Activated naive CD4-positive, alpha-beta T cell treated with anti-CD3 and anti-CD28 coated beads, Interleukin-2, amount 10 ng/mL, durations not matched to agents 7 days and 5 days (primary cell): ENCODE measurements at regions of chr1 and their contacts with region 1.

Region 1: GRCh38 chr1:160291248-160292220 is 6.6 kb upstream of the PEX19 start:
- DNase-seq: peak; percentile 81
- H3K4me3 Mint-ChIP-seq: no peak overlapping the region
- H3K27ac Mint-ChIP-seq: peak overlapping the region; percentile 35
- H3K4me1 Mint-ChIP-seq: no peaks in the 10 kb centered on the region
- H3K27me3 Mint-ChIP-seq: no peaks in the 10 kb centered on the region

Region 2: GRCh38 chr1:160098852-160099561 is 192.5 kb before region 1 on chr1:
- CTCF ChIA-PET with region 1: interaction called, 64 read pairs
- DNase-seq: peak; percentile 99
- H3K4me3 Mint-ChIP-seq: peak overlapping the region; percentile 71
- H3K27ac Mint-ChIP-seq: peak overlapping the region; percentile 93
- H3K4me1 Mint-ChIP-seq: peaks cover 53% of the 10 kb centered on the region
- H3K27me3 Mint-ChIP-seq: peaks cover 7% of the 10 kb centered on the region

Region 3: GRCh38 chr1:160261893-160262794 is 29.4 kb before region 1 on chr1 and contains the start of gene DCAF8:
- CTCF ChIA-PET with region 1: interaction called, 34 read pairs
- DNase-seq: peak; percentile 99
- H3K4me3 Mint-ChIP-seq: peak within 1 kb of the TSS; percentile 94
- H3K27ac Mint-ChIP-seq: peak within 1 kb of the TSS; percentile 99
- H3K4me1 Mint-ChIP-seq: peaks cover 39% of the 10 kb centered on the region
- H3K27me3 Mint-ChIP-seq: peaks cover 4% of the 10 kb centered on the region

Region 4: DNA sequence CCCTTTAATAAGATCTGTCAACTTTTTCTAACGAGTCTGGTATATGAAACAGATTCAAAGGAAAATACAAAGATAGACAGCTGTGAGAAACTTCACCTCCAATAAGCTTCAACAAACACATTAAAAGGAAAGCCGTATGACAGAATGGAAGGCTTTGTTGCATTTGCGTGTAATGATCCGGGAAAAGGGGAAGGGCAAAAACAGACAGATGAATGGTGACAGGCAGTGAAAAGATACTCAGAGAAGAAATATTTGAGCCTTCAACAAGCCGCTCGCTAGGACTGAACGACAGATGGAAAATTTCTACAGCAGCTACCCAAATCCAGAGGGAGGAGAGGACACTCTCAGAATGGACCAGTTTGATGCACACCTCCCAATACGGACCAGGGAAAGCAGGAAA is 36.6 kb after region 1 on chr1:
- CTCF ChIA-PET with region 1: interaction called, 19 read pairs
- DNase-seq: no peak
- H3K4me3 Mint-ChIP-seq: no peak overlapping the region
- H3K27ac Mint-ChIP-seq: no peak overlapping the region
- H3K4me1 Mint-ChIP-seq: peaks cover 5% of the 10 kb centered on the region
- H3K27me3 Mint-ChIP-seq: no peaks in the 10 kb centered on the region

Region 5: GRCh38 chr1:160494620-160495019 is 203.1 kb after region 1 on chr1:
- CTCF ChIA-PET with region 1: no interaction called
- DNase-seq: no peak
- H3K4me3 Mint-ChIP-seq: no peak overlapping the region
- H3K27ac Mint-ChIP-seq: no peak overlapping the region
- H3K4me1 Mint-ChIP-seq: no peaks in the 10 kb centered on the region
- H3K27me3 Mint-ChIP-seq: no peaks in the 10 kb centered on the region